Left lung (tissue), 14 donors: ENCODE measurements at regions of chr9 and their contacts with region 1.

Region 1: DNA sequence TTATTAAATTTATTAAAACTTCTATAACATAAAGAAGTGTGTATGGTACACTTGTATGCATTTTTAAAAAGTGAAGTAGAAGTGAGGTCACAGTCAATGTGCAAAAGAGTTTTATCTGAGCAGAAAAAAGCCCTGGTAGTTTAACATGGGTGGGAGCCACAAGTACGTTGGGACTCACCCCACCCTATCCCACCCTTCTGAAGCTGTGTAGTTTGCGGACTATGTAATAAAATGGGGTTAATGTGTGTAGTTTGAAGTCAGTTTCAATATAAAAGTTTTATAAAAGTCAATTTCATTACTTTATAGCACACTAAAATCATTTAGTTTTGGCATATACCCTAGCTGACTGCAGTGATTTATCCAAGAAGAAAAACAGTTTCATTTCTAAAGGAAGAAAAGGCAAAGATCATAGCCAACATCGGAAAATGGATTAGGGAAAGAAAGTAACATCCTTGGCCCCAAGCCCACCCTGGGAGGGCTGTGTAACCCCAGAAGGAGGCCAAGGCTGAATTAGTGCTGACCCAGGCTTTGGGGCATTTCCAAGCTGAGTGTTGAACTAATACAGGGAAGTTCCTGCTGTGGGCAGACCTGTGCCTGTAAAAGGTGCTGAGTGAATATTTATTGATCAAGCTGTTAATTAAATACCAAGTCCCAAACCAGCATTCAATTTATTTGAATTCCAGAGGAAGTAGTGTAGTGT is 398.6 kb upstream of the ADAMTSL1 start:
- DNase-seq: no peak
- ATAC-seq: no peak
- H3K4me3 ChIP-seq: no peak overlapping the region
- H3K27ac ChIP-seq: no peak overlapping the region
- H3K4me1 ChIP-seq: no peaks in the 10 kb centered on the region
- H3K27me3 ChIP-seq: no peaks in the 10 kb centered on the region
- CTCF ChIP-seq: no peak

Region 2: GRCh38 chr9:17942230-17942897 is 133.0 kb before region 1 on chr9:
- intact Hi-C with region 1: no loop called
- DNase-seq: no peak
- ATAC-seq: no peak
- H3K4me3 ChIP-seq: no peak overlapping the region
- H3K27ac ChIP-seq: no peak overlapping the region
- H3K4me1 ChIP-seq: no peaks in the 10 kb centered on the region
- H3K27me3 ChIP-seq: no peaks in the 10 kb centered on the region
- CTCF ChIP-seq: no peak

Region 3: DNA sequence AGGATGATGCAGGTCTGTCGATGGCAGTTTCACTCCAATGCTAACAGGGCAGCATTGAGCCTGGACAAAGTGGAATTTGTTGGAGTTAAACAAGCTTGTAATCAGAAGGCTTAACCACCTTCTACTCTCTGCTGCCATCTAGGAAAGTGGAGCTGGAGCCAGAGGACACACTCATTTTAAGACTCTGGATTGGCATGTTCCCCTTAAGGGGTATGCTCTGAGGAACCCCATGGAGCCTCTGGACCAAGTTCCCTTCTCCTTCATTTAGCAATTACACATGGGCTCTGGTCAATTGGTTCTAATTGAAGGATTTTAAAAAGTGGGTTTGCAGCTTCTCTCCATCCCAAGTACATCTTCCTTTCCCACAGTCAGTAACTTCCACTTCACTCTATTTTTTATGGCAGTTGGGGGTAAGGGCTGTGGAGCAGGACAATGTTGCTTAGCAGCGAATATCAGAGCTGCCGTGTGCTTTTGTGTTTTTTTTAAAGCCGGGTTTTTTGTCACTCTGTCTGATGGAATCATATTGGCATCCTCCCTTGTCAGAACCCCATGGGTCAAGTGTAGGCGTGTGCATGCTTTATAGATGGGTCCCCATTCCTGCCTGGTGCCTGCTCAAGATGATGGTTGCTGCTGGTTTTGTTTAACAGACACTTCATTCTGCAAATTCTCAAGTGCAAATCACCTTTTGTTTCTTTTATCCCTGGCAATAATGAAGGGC is 67.8 kb after region 1 on chr9:
- intact Hi-C with region 1: loop called in 1 of 2 experiments (anchors 10 kb)
- DNase-seq: peak in 1 of 4 donors; percentile 8
- ATAC-seq: no peak
- H3K4me3 ChIP-seq: no peak overlapping the region
- H3K27ac ChIP-seq: no peak overlapping the region
- H3K4me1 ChIP-seq: no peaks in the 10 kb centered on the region
- H3K27me3 ChIP-seq: no peaks in the 10 kb centered on the region
- CTCF ChIP-seq: no peak

Region 4: GRCh38 chr9:18238254-18238653 is 162.9 kb after region 1 on chr9:
- intact Hi-C with region 1: no loop called
- DNase-seq: no peak
- ATAC-seq: peak; percentile 42
- H3K4me3 ChIP-seq: no peak overlapping the region
- H3K27ac ChIP-seq: no peak overlapping the region
- H3K4me1 ChIP-seq: no peaks in the 10 kb centered on the region
- H3K27me3 ChIP-seq: no peaks in the 10 kb centered on the region
- CTCF ChIP-seq: no peak